Sigmoid colon (tissue), 7 donors: ENCODE measurements at regions of chr18 and their contacts with region 1.

Region 1: GRCh38 chr18:12883684-12884405 is at the start of gene PTPN2:
- DNase-seq: peak; percentile 98
- H3K4me3 ChIP-seq: peak within 1 kb of the TSS; percentile 68 to 87 (median 77)
- H3K27ac ChIP-seq: peak within 1 kb of the TSS; percentile 95 to 100 (median 98)
- H3K4me1 ChIP-seq: peaks cover 0 to 26% (median 15%) of the 10 kb centered on the region in 4 donors
- H3K27me3 ChIP-seq: no peaks in the 10 kb centered on the region
- CTCF ChIP-seq: no peak
- EP300 ChIP-seq: peak in 1 of 4 donors; percentile 9
- POLR2A ChIP-seq: peak; percentile 82 to 85
- total RNA-seq, gene PTPN2: 20.0 to 31.0 (median 21.0) TPM

Region 2: DNA sequence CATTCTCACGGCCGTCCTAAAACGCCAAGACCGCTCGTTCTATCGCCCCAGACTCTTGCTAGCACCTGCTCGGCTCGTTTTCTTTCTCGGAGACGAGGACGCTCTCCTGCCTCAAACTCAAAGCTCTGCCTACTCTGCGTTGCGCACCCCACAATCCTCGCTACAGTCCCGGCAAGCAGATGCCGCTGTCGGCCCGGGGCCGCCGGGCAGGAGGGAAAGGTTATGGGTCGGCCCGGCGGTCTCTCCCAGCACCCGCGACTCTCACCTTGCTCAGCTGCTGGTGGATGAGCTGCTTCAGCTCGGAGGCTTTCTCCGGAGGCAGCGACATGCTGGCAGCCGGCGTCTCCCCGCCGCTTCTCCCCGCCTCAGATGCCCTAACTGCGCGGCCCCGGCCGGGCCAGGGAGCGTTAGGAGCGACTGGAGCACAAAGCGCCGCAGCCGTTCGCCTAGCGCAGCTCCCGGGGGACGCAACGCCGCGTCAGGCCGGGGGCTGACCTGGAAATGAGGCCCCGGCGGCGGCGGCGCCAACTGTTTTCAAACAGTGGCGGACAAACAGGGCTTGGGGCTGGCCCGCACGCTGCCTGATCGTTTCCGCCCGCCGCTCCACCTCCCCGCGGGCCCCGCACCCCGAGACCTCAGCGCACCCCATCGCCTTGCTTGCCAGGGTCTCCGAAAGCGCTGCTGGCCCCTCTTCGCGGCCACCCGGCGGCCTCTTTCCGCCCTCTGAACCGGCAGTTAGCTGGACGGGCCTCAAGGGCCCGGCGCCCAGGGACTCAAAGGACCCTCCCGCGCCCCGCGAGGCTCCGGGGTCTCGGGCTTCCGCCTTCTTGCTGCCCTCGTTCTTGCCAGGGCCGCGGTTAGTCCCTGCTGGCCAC is 181.4 kb before region 1 on chr18 and contains the starts of genes CEP76 and PSMG2:
- intact Hi-C with region 1: loop called (anchors 5 kb)
- DNase-seq: peak; percentile 93
- H3K4me3 ChIP-seq: peak within 1 kb of the TSS; percentile 68 to 92 (median 88)
- H3K27ac ChIP-seq: peak within 1 kb of the TSS; percentile 90 to 95 (median 94)
- H3K4me1 ChIP-seq: peaks cover 0 to 34% (median 27%) of the 10 kb centered on the region in 4 donors
- H3K27me3 ChIP-seq: no peaks in the 10 kb centered on the region
- CTCF ChIP-seq: no peak
- EP300 ChIP-seq: no peak
- POLR2A ChIP-seq: peak; percentile 70 to 79
- total RNA-seq, gene CEP76: 5.8 to 9.1 (median 8.1) TPM
- total RNA-seq, gene PSMG2: 85.1 to 100 (median 92.4) TPM

Region 3: DNA sequence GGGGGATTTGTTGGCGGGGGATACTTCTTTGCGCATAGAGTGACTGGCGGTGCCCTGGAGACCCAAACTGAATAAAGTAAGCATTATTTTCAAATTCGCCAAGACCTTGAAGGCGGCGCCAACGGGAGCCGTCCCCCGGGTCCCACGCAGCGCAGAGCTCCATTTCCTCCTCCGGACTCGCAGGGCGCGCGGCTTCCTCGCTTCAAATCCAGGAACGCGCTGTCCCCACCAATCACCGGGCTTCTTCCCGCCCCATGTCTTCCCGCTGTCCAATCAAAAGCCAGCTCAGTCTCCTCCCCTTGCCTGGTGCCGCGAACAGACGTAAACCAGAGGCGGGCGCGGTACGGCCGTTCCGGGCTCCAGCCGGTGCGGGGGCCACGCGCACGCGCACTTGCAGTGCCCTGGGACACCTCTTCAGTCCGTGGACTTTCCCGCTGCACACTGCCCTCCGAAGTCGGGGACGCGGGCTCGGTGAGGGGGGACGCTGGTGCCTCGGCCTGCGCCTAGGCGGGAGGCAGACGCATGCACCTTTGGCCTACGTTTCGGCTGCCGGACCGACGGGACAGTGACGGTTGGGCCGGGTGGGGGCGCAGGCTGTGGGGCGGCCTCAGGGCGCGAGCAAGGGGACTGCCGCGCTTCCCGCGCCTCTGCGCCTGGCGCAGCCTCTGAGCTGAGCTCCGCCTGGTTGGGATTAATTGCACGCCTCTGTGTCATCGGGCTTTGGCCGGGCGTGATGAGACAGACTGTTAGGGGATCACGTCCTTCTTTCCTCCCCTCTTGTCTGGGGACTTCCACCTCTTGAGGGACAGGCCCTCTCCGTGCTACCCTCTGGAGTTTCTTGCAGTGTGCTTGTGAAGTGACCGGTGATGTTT is 107.4 kb after region 1 on chr18 and contains the start of gene CEP192:
- intact Hi-C with region 1: loop called (anchors 5 kb)
- DNase-seq: peak; percentile 99
- H3K4me3 ChIP-seq: peak within 1 kb of the TSS; percentile 66 to 86 (median 71)
- H3K27ac ChIP-seq: peak within 1 kb of the TSS; percentile 81 to 88 (median 87)
- H3K4me1 ChIP-seq: peaks cover 0 to 29% (median 20%) of the 10 kb centered on the region in 4 donors
- H3K27me3 ChIP-seq: no peaks in the 10 kb centered on the region
- CTCF ChIP-seq: no peak
- EP300 ChIP-seq: no peak
- POLR2A ChIP-seq: peak; percentile 44 to 66
- total RNA-seq, gene CEP192: 19.8 to 30.4 (median 25.4) TPM